CD4-positive, alpha-beta memory T cell (primary cell): ENCODE measurements at regions of chr1 and their contacts with region 1.

Region 1: DNA sequence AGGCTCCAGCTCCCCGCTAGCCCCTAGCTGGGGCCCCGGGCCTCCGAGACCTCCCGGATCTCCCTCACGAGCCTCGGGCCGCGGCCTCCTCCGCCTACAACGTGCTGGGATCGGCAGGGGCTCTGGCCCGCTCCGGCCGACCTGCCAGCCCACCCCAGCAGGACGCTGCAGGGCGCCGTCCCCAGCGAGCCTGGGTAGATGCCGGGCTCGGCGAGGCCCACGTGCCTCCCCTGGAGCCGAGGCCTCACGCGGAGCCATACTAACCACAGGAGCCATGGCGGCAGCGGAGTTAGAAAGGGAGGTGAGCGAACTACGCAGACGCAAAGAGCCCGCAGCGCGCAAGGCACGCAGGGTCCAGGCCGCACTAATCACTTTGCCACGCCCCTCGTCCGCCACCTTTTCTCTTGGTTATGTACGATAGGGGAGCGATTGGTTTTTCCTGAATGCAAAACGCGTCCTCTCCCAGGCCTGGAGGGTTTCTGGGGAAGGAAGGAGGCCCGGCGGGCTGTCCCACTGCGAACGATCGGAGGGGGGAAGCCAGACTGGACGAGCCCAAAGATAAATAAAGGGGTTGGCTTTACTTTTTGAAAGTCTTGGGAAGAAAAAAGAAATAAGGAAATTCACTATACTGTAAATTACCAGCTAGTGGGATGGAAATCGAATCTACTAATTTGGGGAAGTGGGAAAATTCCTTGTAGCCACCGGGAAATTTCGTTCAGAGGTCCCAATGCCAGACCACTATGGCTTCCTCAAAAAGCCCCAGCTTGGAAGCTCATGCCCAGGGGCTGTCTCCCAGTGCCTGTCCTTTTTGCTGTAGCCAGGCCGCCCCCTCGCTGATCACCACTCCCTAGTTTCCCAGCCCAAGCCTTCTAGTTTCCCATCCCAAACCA is at the start of gene RPL22:
- DNase-seq: peak; percentile 94 to 99 (median 97)
- H3K4me3 ChIP-seq: peak within 1 kb of the TSS; percentile 57 to 84
- H3K4me3 Mint-ChIP-seq: peak within 1 kb of the TSS; percentile 88 to 94 (median 92)
- H3K27ac ChIP-seq: peak within 1 kb of the TSS; percentile 74
- H3K27ac Mint-ChIP-seq: peak within 1 kb of the TSS; percentile 86 to 97 (median 95)
- H3K4me1 ChIP-seq: peaks cover 38% of the 10 kb centered on the region
- H3K4me1 Mint-ChIP-seq: peaks cover 31 to 53% (median 42%) of the 10 kb centered on the region in 4 donors
- H3K27me3 ChIP-seq: no peaks in the 10 kb centered on the region
- H3K27me3 Mint-ChIP-seq: peaks cover 0 to 2% of the 10 kb centered on the region in 2 donors
- total RNA-seq, gene RPL22: 491 to 503 TPM

Region 2: GRCh38 chr1:5992026-5992813 is 207.3 kb before region 1 on chr1 and contains the start of gene NPHP4:
- CTCF ChIA-PET with region 1: no interaction called
- POLR2A ChIA-PET with region 1: no interaction called
- intact Hi-C with region 1: loop called (anchors 1 kb)
- DNase-seq: peak; percentile 99
- H3K4me3 ChIP-seq: peak within 1 kb of the TSS; percentile 86 to 92
- H3K4me3 Mint-ChIP-seq: peak within 1 kb of the TSS; percentile 95 to 98 (median 96)
- H3K27ac ChIP-seq: peak within 1 kb of the TSS; percentile 96
- H3K27ac Mint-ChIP-seq: peak within 1 kb of the TSS; percentile 97 to 99 (median 98)
- H3K4me1 ChIP-seq: peaks cover 37% of the 10 kb centered on the region
- H3K4me1 Mint-ChIP-seq: peaks cover 13 to 39% (median 30%) of the 10 kb centered on the region in 4 donors
- H3K27me3 ChIP-seq: no peaks in the 10 kb centered on the region
- H3K27me3 Mint-ChIP-seq: no peaks in the 10 kb centered on the region
- total RNA-seq, gene NPHP4: 7.6 to 9.6 TPM

Region 3: GRCh38 chr1:6026095-6026809 is 173.3 kb before region 1 on chr1:
- CTCF ChIA-PET with region 1: interaction called, 4 read pairs
- POLR2A ChIA-PET with region 1: interaction called, 3 read pairs
- intact Hi-C with region 1: loop called (anchors 10 kb)
- DNase-seq: peak; percentile 89 to 96 (median 90)
- H3K4me3 ChIP-seq: peak overlapping the region; percentile 54 to 89
- H3K4me3 Mint-ChIP-seq: peak overlapping the region; percentile 88 to 99 (median 92)
- H3K27ac ChIP-seq: peak overlapping the region; percentile 89
- H3K27ac Mint-ChIP-seq: peak overlapping the region; percentile 96 to 99 (median 98)
- H3K4me1 ChIP-seq: peaks cover 53% of the 10 kb centered on the region
- H3K4me1 Mint-ChIP-seq: peaks cover 43 to 74% (median 56%) of the 10 kb centered on the region in 4 donors
- H3K27me3 ChIP-seq: no peaks in the 10 kb centered on the region
- H3K27me3 Mint-ChIP-seq: no peaks in the 10 kb centered on the region

Region 4: DNA sequence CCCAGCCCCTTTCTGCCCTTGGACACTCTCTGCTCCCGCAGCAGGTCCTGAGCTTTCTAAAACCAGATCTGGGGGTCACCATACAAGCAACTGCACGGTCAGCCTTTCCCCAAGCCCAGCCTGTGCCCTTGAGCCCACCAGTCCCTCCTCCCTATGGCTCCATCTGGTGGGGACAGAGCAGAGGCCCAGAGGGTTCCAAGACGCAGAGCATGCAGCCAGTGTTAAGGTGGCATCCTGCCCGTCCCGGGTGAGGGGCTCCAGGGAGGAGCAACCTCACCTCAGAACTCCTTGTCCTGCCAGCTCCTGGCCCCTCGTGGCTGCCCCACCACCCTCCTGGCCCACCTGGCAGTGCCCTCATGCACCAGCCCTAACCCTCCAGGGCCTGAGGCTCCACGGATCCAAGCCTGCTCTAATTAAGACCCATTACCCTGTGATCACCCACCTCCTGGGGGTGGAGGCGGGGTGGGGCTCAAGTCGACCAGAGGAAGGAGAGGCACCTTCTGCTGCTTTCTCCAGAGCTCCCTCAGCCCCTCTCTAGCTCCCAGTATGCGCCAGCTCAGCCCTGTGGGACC is 27.9 kb before region 1 on chr1:
- CTCF ChIA-PET with region 1: no interaction called
- POLR2A ChIA-PET with region 1: no interaction called
- intact Hi-C with region 1: no loop called
- DNase-seq: no peak
- H3K4me3 ChIP-seq: no peak overlapping the region
- H3K4me3 Mint-ChIP-seq: no peak overlapping the region
- H3K27ac ChIP-seq: no peak overlapping the region
- H3K27ac Mint-ChIP-seq: no peak overlapping the region
- H3K4me1 ChIP-seq: no peaks in the 10 kb centered on the region
- H3K4me1 Mint-ChIP-seq: no peaks in the 10 kb centered on the region
- H3K27me3 ChIP-seq: no peaks in the 10 kb centered on the region
- H3K27me3 Mint-ChIP-seq: peaks cover 2 to 25% of the 10 kb centered on the region in 2 donors

Region 5: GRCh38 chr1:6235296-6235677 is 35.7 kb after region 1 on chr1:
- CTCF ChIA-PET with region 1: interaction called, 20 read pairs
- POLR2A ChIA-PET with region 1: interaction called, 3 read pairs
- intact Hi-C with region 1: loop called (anchors 1 kb)
- DNase-seq: peak in 1 of 5 donors; percentile 17
- H3K4me3 ChIP-seq: peak overlapping the region; percentile 60 to 86
- H3K4me3 Mint-ChIP-seq: peak overlapping the region; percentile 84 to 93 (median 88)
- H3K27ac ChIP-seq: peak overlapping the region; percentile 42
- H3K27ac Mint-ChIP-seq: peak overlapping the region; percentile 15 to 84 (median 57)
- H3K4me1 ChIP-seq: peaks cover 11% of the 10 kb centered on the region
- H3K4me1 Mint-ChIP-seq: peaks cover 6 to 16% (median 12%) of the 10 kb centered on the region in 4 donors
- H3K27me3 ChIP-seq: peaks cover 5% of the 10 kb centered on the region
- H3K27me3 Mint-ChIP-seq: peaks cover 3 to 9% of the 10 kb centered on the region in 2 donors